ENCODE measurements at regions of chr3 and their contacts with region 1.

Region 1: DNA sequence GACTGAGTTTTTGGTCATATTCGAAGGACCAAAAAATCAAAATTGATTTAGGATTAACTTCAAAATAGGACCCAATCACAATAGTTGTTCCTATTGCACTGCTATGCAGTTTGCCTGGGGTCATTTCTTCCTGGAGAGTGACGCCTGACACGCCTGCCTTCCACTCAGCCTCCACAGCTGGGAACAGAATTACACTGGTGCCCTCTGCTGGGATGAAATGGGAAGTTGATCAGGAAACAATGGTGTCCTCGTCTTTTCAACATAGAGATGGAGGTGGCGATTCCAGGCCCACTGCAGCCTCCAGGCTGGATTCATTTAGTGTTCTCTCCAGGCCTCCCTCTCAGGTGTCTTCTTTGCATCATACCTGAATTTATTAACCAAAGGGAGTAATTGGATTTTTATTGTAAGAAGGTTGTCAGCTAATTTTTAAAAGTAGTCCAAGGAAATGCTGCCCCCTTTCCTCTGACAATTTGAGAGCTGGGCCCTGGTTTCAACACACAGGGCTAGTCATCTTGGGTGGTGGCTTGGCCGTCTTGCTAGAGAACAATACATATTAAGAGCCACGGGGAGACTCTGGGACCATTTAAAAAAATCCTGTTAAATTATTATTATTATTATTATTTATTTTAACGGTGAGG is 69.7 kb downstream of the GAP43 start:
- DNase-seq: peak; percentile 79
- ATAC-seq: peak; percentile 94
- H3K4me3 ChIP-seq: no peak overlapping the region
- H3K4me3 Mint-ChIP-seq: no peak overlapping the region
- H3K27ac ChIP-seq: no peak overlapping the region
- H3K27ac Mint-ChIP-seq: no peak overlapping the region
- H3K4me1 ChIP-seq: no peaks in the 10 kb centered on the region
- H3K4me1 Mint-ChIP-seq: no peaks in the 10 kb centered on the region
- H3K27me3 ChIP-seq: no peaks in the 10 kb centered on the region
- H3K27me3 Mint-ChIP-seq: peaks cover 4% of the 10 kb centered on the region
- CTCF ChIP-seq: peak; percentile 85

Region 2: GRCh38 chr3:114827495-114827894 is 865.5 kb before region 1 on chr3:
- CTCF ChIA-PET with region 1: interaction called, 8 read pairs
- POLR2A ChIA-PET with region 1: no interaction called
- intact Hi-C with region 1: loop called (anchors 1 kb)
- DNase-seq: peak; percentile 49
- ATAC-seq: peak; percentile 31
- H3K4me3 ChIP-seq: no peak overlapping the region
- H3K4me3 Mint-ChIP-seq: no peak overlapping the region
- H3K27ac ChIP-seq: no peak overlapping the region
- H3K27ac Mint-ChIP-seq: no peak overlapping the region
- H3K4me1 ChIP-seq: no peaks in the 10 kb centered on the region
- H3K4me1 Mint-ChIP-seq: no peaks in the 10 kb centered on the region
- H3K27me3 ChIP-seq: no peaks in the 10 kb centered on the region
- H3K27me3 Mint-ChIP-seq: no peaks in the 10 kb centered on the region
- CTCF ChIP-seq: peak; percentile 62

Region 3: GRCh38 chr3:115040673-115041286 is 652.2 kb before region 1 on chr3:
- CTCF ChIA-PET with region 1: interaction called, 14 read pairs
- POLR2A ChIA-PET with region 1: no interaction called
- intact Hi-C with region 1: loop called (anchors 1 kb)
- DNase-seq: peak; percentile 55
- ATAC-seq: peak; percentile 41
- H3K4me3 ChIP-seq: no peak overlapping the region
- H3K4me3 Mint-ChIP-seq: no peak overlapping the region
- H3K27ac ChIP-seq: no peak overlapping the region
- H3K27ac Mint-ChIP-seq: no peak overlapping the region
- H3K4me1 ChIP-seq: no peaks in the 10 kb centered on the region
- H3K4me1 Mint-ChIP-seq: no peaks in the 10 kb centered on the region
- H3K27me3 ChIP-seq: no peaks in the 10 kb centered on the region
- H3K27me3 Mint-ChIP-seq: no peaks in the 10 kb centered on the region
- CTCF ChIP-seq: peak; percentile 85

Region 4: DNA sequence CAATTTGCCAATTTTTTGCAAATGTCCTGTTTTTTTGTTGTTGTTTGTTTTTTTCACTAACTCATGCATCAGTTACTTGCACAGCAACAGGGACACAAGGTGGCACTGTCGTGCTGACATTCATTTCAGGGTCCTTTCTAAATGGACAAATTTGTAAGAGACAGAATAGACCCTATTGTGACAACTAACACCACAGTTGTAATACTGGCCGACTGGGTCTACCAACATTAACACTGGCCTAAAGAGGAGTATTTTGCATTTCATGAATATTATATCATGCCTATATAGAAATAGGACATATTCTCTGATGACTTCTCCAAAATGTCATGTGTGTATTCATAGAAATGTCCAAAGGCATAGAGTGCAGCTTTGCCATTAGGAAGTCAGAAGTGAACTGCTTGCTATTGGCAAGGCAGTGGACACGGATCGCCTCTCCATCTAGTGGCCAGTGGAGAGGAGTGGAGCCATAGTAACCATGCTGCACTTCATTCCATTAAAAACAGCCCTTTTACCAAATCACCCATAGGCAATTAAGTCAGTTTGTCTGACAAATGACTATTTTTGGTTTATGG is 600.7 kb before region 1 on chr3:
- CTCF ChIA-PET with region 1: interaction called, 44 read pairs
- POLR2A ChIA-PET with region 1: no interaction called
- intact Hi-C with region 1: loop called (anchors 1 kb)
- DNase-seq: peak; percentile 69
- ATAC-seq: peak; percentile 33
- H3K4me3 ChIP-seq: no peak overlapping the region
- H3K4me3 Mint-ChIP-seq: no peak overlapping the region
- H3K27ac ChIP-seq: no peak overlapping the region
- H3K27ac Mint-ChIP-seq: no peak overlapping the region
- H3K4me1 ChIP-seq: no peaks in the 10 kb centered on the region
- H3K4me1 Mint-ChIP-seq: peaks cover 6% of the 10 kb centered on the region
- H3K27me3 ChIP-seq: no peaks in the 10 kb centered on the region
- H3K27me3 Mint-ChIP-seq: no peaks in the 10 kb centered on the region
- CTCF ChIP-seq: peak; percentile 82

Region 5: DNA sequence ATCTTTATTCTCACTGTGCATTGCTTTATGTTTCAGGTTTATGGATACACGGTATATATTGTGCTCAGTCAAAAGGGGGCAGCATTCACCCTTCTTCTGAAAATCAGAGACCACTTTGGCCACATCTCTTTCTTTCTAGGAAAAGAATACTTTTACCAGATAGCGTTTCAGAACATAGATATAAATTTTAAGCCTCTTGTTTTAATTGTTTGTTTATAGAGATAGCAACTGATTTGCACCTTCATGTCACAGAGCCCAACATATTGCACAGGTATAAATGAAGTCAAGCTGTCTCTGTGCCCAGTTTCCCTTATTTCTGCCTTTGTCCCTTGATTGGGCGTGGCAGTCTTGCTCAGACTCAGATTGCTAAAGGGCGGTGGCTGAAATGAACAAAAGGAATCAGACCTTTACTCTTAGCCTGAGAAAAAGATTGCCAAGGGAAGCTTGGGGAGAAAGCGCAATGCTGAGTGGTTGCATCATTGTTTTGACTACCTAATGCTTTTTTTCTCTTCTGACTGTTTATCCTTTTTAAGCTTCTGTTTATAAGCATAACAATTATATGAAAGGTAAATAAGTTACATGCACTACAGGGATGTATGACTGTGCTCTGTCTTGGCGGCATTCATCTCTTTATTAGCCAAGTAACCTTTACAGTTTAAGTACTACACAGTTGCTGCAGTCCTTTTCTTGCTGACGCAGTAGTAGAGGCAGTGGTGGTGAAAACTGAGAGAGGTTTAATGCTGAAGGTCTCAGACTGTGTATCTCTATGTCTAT is 475.1 kb before region 1 on chr3:
- CTCF ChIA-PET with region 1: interaction called, 28 read pairs
- POLR2A ChIA-PET with region 1: no interaction called
- intact Hi-C with region 1: loop called (anchors 1 kb)
- DNase-seq: peak; percentile 45
- ATAC-seq: no peak
- H3K4me3 ChIP-seq: no peak overlapping the region
- H3K4me3 Mint-ChIP-seq: no peak overlapping the region
- H3K27ac ChIP-seq: no peak overlapping the region
- H3K27ac Mint-ChIP-seq: no peak overlapping the region
- H3K4me1 ChIP-seq: peaks cover 5 to 6% of the 10 kb centered on the region in 2 donors
- H3K4me1 Mint-ChIP-seq: peaks cover 3% of the 10 kb centered on the region
- H3K27me3 ChIP-seq: peaks cover 0 to 7% (median 2%) of the 10 kb centered on the region in 4 experiments
- H3K27me3 Mint-ChIP-seq: peaks cover 23% of the 10 kb centered on the region
- CTCF ChIP-seq: peak; percentile 60

Region 6: DNA sequence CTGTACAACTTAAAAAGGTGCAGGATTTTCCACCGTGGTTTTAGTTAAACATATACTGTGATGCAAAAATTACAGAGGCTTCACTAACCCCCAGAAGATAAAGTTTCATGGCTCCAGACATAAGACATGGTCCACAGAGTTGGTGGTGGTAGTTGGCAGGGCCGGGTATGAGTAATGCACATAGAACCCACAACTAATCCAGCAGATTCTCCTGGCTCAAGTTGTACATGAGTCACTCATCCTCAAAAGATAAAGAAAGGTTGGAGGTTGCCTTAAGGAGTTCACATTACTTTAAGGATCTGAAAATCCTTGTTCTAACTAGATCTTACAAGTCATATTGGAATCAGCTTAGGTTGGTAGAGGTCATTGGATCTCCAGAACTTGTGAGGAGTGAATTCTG is 447.6 kb before region 1 on chr3:
- CTCF ChIA-PET with region 1: no interaction called
- POLR2A ChIA-PET with region 1: no interaction called
- intact Hi-C with region 1: no loop called
- DNase-seq: no peak
- ATAC-seq: no peak
- H3K4me3 ChIP-seq: no peak overlapping the region
- H3K4me3 Mint-ChIP-seq: no peak overlapping the region
- H3K27ac ChIP-seq: no peak overlapping the region
- H3K27ac Mint-ChIP-seq: no peak overlapping the region
- H3K4me1 ChIP-seq: no peaks in the 10 kb centered on the region
- H3K4me1 Mint-ChIP-seq: no peaks in the 10 kb centered on the region
- H3K27me3 ChIP-seq: no peaks in the 10 kb centered on the region
- H3K27me3 Mint-ChIP-seq: peaks cover 11% of the 10 kb centered on the region
- CTCF ChIP-seq: no peak

Region 7: GRCh38 chr3:115658337-115659181 is 34.4 kb before region 1 on chr3:
- CTCF ChIA-PET with region 1: interaction called, 7 read pairs
- POLR2A ChIA-PET with region 1: no interaction called
- intact Hi-C with region 1: loop called (anchors 2 kb)
- DNase-seq: peak; percentile 86
- ATAC-seq: peak; percentile 97
- H3K4me3 ChIP-seq: peak overlapping the region; percentile 66 to 93 (median 70)
- H3K4me3 Mint-ChIP-seq: peak overlapping the region; percentile 94
- H3K27ac ChIP-seq: peak overlapping the region; percentile 88 to 93
- H3K27ac Mint-ChIP-seq: peak overlapping the region; percentile 100
- H3K4me1 ChIP-seq: peaks cover 14 to 33% of the 10 kb centered on the region in 2 donors
- H3K4me1 Mint-ChIP-seq: peaks cover 39% of the 10 kb centered on the region
- H3K27me3 ChIP-seq: no peaks in the 10 kb centered on the region
- H3K27me3 Mint-ChIP-seq: no peaks in the 10 kb centered on the region
- CTCF ChIP-seq: no peak

Measured in B cell (primary cell).